ENCODE measurements at regions of chr3 and their contacts with region 1.

Region 1: DNA sequence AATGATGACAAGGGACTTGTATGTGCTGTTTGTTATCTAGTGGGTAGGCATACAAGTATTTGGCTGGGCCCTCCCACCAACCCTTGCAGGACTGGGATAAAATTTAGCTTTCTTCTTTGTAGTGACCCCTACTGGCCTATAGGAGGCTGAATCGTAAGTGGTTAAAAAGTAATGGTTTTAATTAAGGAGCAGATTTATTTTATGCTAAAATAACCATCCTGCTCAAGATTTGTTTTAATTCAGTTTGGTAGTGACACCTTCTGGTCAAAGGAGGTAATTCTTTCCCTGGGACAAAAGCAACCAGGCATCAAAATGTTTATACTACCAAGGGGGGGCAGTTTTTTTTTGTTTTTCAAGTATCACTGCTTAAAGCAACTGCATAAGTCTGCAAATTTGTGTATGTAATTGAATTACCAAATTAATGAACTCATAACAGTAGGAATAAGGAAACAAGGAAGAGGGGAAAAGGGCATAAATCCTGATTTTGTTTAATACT is 70.7 kb downstream of the TOP2B start:
- DNase-seq: no peak
- ATAC-seq: peak; percentile 69

Region 2: DNA sequence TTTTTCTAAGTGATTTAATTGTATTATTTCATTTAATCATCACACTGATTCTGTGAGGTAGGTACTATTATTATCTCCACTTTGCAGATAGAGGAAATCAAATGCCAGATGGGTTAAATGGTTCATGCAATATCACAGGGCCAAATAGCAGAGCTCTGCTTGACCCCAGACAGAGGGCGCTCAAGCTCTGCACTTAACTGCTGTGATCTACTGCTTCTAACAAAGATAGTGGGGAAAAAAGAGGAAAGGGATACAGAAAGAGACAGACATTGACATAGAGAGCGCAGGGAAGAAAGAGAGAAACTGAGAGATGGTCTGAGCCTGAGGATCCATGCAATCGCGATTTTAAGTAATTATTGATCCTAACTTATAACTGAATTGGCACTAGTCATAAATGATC is 820.3 kb before region 1 on chr3:
- intact Hi-C with region 1: loop called (anchors 10 kb)
- DNase-seq: peak; percentile 39
- ATAC-seq: peak; percentile 86

Region 3: GRCh38 chr3:24963762-24964625 is 630.1 kb before region 1 on chr3:
- intact Hi-C with region 1: loop called (anchors 5 kb)
- DNase-seq: no peak
- ATAC-seq: peak; percentile 48

Region 4: DNA sequence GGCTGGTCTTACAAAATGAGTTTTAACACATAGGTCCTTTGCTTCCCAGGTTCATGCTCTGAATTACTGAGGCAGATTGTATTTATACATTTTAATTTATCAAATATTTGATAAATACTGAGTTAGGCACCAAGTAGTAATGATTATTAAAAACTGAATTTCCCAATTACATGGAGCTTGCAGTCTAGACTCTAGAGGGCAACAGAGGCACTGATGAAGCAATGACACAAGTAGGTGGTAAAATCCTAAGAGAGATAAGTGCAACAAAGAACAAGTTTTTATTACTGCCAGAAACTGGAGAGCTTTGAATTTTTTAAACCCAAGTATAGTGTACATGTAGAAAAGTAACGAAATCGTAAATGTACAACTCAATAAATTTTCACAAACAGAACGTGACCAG is 572.2 kb before region 1 on chr3:
- intact Hi-C with region 1: loop called (anchors 10 kb)
- DNase-seq: no peak
- ATAC-seq: peak; percentile 83

Region 5: GRCh38 chr3:25171118-25171807 is 422.8 kb before region 1 on chr3:
- intact Hi-C with region 1: loop called (anchors 10 kb)
- DNase-seq: no peak
- ATAC-seq: no peak

Region 6: DNA sequence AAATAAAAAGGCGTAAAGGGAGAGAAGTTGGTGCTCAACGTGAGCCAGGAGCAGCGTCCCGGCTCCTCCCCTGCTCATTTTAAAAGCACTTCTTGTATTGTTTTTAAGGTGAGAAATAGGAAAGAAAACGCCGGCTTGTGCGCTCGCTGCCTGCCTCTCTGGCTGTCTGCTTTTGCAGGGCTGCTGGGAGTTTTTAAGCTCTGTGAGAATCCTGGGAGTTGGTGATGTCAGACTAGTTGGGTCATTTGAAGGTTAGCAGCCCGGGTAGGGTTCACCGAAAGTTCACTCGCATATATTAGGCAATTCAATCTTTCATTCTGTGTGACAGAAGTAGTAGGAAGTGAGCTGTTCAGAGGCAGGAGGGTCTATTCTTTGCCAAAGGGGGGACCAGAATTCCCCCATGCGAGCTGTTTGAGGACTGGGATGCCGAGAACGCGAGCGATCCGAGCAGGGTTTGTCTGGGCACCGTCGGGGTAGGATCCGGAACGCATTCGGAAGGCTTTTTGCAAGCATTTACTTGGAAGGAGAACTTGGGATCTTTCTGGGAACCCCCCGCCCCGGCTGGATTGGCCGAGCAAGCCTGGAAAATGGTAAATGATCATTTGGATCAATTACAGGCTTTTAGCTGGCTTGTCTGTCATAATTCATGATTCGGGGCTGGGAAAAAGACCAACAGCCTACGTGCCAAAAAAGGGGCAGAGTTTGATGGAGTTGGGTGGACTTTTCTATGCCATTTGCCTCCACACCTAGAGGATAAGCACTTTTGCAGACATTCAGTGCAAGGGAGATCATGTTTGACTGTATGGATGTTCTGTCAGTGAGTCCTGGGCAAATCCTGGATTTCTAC is 165.9 kb before region 1 on chr3 and contains the start of gene RARB:
- intact Hi-C with region 1: loop called (anchors 5 kb)
- DNase-seq: peak; percentile 74
- ATAC-seq: peak; percentile 88
- total RNA-seq, gene RARB: 19.4 TPM

Region 7: GRCh38 chr3:25513642-25514266 is 80.3 kb before region 1 on chr3:
- intact Hi-C with region 1: loop called (anchors 10 kb)
- DNase-seq: no peak
- ATAC-seq: peak; percentile 79